ENCODE measurements at regions of chr12 and their contacts with region 1.

Region 1: GRCh38 chr12:52121824-52122539 is 42.5 kb downstream of the SMIM41 start:
- DNase-seq: no peak
- ATAC-seq: peak; percentile 12
- H3K4me3 ChIP-seq: no peak overlapping the region
- H3K27ac ChIP-seq: peak overlapping the region; percentile 72
- H3K4me1 ChIP-seq: peaks cover 50% of the 10 kb centered on the region
- H3K27me3 ChIP-seq: no peaks in the 10 kb centered on the region
- CTCF ChIP-seq: peak; percentile 66 to 89 (median 78)
- EP300 ChIP-seq: no peak
- POLR2A ChIP-seq: no peak
- RAD21 ChIP-seq: peak; percentile 82

Region 2: GRCh38 chr12:51994959-51995358 is 127.0 kb before region 1 on chr12:
- CTCF ChIA-PET with region 1: interaction called, 16 read pairs
- POLR2A ChIA-PET with region 1: no interaction called
- RAD21 ChIA-PET with region 1: interaction called, 7 read pairs
- SMC1A ChIA-PET with region 1: interaction called, 11 read pairs
- in situ Hi-C with region 1: no loop called
- intact Hi-C with region 1: no loop called
- DNase-seq: no peak
- ATAC-seq: no peak
- H3K4me3 ChIP-seq: no peak overlapping the region
- H3K27ac ChIP-seq: no peak overlapping the region
- H3K4me1 ChIP-seq: no peaks in the 10 kb centered on the region
- H3K27me3 ChIP-seq: no peaks in the 10 kb centered on the region; a peak in 1 of 4 replicates
- CTCF ChIP-seq: no peak
- EP300 ChIP-seq: no peak
- POLR2A ChIP-seq: no peak
- RAD21 ChIP-seq: no peak

Region 3: GRCh38 chr12:52032804-52033502 is 89.0 kb before region 1 on chr12:
- CTCF ChIA-PET with region 1: interaction called, 395 read pairs
- POLR2A ChIA-PET with region 1: interaction called, 9 read pairs
- RAD21 ChIA-PET with region 1: interaction called, 151 read pairs
- SMC1A ChIA-PET with region 1: interaction called, 320 read pairs
- in situ Hi-C with region 1: loop called (anchors 5 kb)
- intact Hi-C with region 1: no loop called
- DNase-seq: peak; percentile 55
- ATAC-seq: peak; percentile 94
- H3K4me3 ChIP-seq: peak overlapping the region; percentile 51; the same call in 1 of the 2 replicates
- H3K27ac ChIP-seq: no peak overlapping the region
- H3K4me1 ChIP-seq: peaks cover 17% of the 10 kb centered on the region
- H3K27me3 ChIP-seq: no peaks in the 10 kb centered on the region; a peak in 1 of 4 replicates
- CTCF ChIP-seq: no peak
- EP300 ChIP-seq: no peak
- POLR2A ChIP-seq: peak; percentile 62
- RAD21 ChIP-seq: no peak

Region 4: DNA sequence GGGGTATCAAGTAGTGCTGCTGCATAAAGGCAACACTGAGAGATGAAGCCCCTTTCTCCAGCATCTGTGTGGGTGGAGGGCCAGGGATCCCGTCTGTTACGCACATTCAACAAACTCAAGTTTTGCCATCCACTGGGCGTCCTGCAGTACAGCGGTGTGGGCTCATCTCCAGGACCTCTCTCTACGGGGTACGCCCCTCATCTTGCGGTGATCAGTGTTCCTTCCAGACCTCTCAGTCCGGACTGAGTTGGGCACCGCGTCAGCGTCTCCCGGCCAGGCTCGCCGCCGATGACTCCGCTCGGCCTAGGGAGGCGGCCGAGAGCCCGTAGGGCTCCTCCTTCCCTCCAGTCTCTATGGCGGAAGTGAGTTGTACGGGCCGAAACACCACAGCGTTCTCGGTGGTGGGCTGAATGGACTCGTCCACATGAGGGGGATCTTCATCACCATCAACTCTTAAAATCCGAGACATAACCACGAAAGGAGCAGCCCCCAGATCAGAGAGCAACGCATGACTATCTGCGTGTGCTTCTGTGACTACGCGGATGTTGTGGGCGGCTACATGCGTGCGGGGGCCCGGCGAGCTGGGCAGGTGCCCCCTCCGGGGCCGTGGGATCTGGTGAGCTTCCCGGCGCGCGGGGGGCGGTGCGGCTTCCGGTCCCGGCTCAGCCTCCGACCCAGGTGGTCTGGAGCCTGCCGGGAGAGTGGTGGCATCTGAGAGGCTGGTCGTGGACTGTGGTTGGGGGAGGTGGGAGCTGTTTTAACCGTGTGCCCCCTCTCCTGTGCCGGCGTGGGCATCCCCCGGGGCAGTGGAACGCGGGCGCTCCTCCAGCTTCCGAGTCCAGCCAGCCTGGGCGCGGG is 52.4 kb before region 1 on chr12 and contains the start of gene ATG101:
- CTCF ChIA-PET with region 1: interaction called, 42 read pairs
- POLR2A ChIA-PET with region 1: interaction called, 3 read pairs
- RAD21 ChIA-PET with region 1: interaction called, 8 read pairs
- SMC1A ChIA-PET with region 1: interaction called, 7 read pairs
- in situ Hi-C with region 1: no loop called
- intact Hi-C with region 1: no loop called
- DNase-seq: peak; percentile 73
- ATAC-seq: peak; percentile 93
- H3K4me3 ChIP-seq: peak within 1 kb of the TSS; percentile 98
- H3K27ac ChIP-seq: peak within 1 kb of the TSS; percentile 95
- H3K4me1 ChIP-seq: peaks cover 13% of the 10 kb centered on the region
- H3K27me3 ChIP-seq: no peaks in the 10 kb centered on the region; a peak in 1 of 4 replicates
- CTCF ChIP-seq: peak; percentile 91 to 96 (median 95)
- EP300 ChIP-seq: peak; percentile 52 to 56; a peak in 2 of 4 replicates
- POLR2A ChIP-seq: peak; percentile 94
- RAD21 ChIP-seq: no peak; the same call in 1 of the 2 replicates
- polyA plus RNA-seq, gene ATG101: 2.7 to 5.6 TPM

Region 5: GRCh38 chr12:52087961-52088820 is 33.8 kb before region 1 on chr12:
- CTCF ChIA-PET with region 1: interaction called, 143 read pairs
- POLR2A ChIA-PET with region 1: no interaction called
- RAD21 ChIA-PET with region 1: interaction called, 13 read pairs
- SMC1A ChIA-PET with region 1: interaction called, 62 read pairs
- in situ Hi-C with region 1: no loop called
- intact Hi-C with region 1: loop called (anchors 1 kb)
- DNase-seq: no peak
- ATAC-seq: peak; percentile 86
- H3K4me3 ChIP-seq: no peak overlapping the region
- H3K27ac ChIP-seq: no peak overlapping the region
- H3K4me1 ChIP-seq: peaks cover 8% of the 10 kb centered on the region
- H3K27me3 ChIP-seq: no peaks in the 10 kb centered on the region; a peak in 1 of 4 replicates
- CTCF ChIP-seq: no peak
- EP300 ChIP-seq: peak in 1 of 2 experiments; percentile 36; a peak in 2 of 4 replicates
- POLR2A ChIP-seq: no peak
- RAD21 ChIP-seq: no peak